Psoas muscle (tissue), 8 donors: ENCODE measurements at regions of chr22 and their contacts with region 1.

Region 1: DNA sequence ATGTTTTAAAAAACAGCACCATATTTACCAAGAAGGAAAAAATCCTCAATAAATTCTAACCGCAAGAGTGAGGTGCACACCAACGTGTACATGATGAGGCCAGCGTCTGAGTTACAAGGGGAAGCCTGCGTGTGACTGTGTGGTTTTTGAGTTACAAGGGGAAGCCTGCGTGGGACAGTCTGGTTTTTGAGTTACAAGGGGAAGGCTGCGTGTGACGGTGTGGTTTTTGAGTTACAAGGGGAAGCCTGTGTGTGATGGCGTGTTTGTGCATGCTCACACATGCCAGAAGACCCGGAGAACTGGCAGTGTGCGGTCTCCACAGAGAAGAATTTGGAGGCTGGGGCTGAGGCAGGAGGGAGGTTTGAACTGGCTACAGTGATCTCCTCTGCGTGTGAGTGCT is 1376.4 kb downstream of the TBC1D22A start:
- DNase-seq: no peak
- ATAC-seq: no peak
- H3K4me3 ChIP-seq: no peak overlapping the region
- H3K27ac ChIP-seq: no peak overlapping the region
- H3K4me1 ChIP-seq: no peaks in the 10 kb centered on the region
- H3K27me3 ChIP-seq: peaks cover 0 to 13% (median 0%) of the 10 kb centered on the region in 3 donors
- CTCF ChIP-seq: no peak

Region 2: DNA sequence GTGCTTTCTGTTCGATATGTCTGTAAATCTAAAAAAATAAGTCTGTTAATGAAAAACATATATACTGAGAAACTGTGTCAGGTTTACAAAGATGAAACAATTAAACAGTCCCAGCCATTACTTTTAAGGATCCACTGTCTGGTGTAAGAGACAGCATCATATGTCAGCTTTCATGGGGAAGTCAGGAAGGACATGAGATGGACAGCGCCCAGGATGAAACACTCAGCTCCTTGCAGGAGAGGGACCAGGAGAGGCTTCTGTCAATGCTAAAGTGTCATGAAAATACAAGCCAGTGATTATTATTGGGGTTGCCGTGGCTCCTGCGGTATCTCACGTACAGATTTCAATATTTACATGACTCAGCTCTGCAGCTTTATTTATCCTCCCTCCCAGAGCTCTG is 148.2 kb after region 1 on chr22:
- intact Hi-C with region 1: loop called in 1 of 2 experiments (anchors 10 kb)
- DNase-seq: no peak
- ATAC-seq: no peak
- H3K4me3 ChIP-seq: no peak overlapping the region
- H3K27ac ChIP-seq: no peak overlapping the region
- H3K4me1 ChIP-seq: no peaks in the 10 kb centered on the region
- H3K27me3 ChIP-seq: peaks cover 0 to 3% (median 0%) of the 10 kb centered on the region in 3 donors
- CTCF ChIP-seq: no peak